ENCODE measurements at regions of chr11 and their contacts with region 1.

Region 1: DNA sequence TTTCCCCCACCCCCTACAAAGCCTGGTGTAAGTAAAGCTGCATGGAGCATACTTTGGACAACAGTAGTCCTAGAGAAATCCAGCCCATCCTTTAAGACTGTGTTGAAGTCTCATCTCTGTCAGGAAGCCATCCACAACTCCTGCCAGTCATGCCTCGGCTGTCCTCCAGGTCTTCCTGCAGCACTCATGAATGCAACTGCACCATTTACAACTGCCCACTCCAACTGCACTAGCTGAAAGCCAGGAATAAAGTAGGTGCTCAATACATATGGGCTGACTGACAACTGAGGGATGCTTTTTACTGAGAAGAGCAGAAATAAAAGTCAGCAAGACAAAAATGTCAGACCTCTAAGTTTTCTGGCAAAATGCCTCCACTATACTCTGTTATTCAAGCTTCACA is 27.4 kb downstream of the IL18BP start:
- DNase-seq: no peak
- H3K4me3 ChIP-seq: no peak overlapping the region
- CTCF ChIP-seq: no peak
- POLR2A ChIP-seq: no peak

Region 2: GRCh38 chr11:72091005-72091691 is 65.1 kb after region 1 on chr11:
- intact Hi-C with region 1: loop called (anchors 5 kb)
- DNase-seq: peak in 1 of 2 donors; percentile 71
- H3K4me3 ChIP-seq: no peak overlapping the region
- CTCF ChIP-seq: peak in 1 of 3 donors; percentile 79
- POLR2A ChIP-seq: no peak

Region 3: DNA sequence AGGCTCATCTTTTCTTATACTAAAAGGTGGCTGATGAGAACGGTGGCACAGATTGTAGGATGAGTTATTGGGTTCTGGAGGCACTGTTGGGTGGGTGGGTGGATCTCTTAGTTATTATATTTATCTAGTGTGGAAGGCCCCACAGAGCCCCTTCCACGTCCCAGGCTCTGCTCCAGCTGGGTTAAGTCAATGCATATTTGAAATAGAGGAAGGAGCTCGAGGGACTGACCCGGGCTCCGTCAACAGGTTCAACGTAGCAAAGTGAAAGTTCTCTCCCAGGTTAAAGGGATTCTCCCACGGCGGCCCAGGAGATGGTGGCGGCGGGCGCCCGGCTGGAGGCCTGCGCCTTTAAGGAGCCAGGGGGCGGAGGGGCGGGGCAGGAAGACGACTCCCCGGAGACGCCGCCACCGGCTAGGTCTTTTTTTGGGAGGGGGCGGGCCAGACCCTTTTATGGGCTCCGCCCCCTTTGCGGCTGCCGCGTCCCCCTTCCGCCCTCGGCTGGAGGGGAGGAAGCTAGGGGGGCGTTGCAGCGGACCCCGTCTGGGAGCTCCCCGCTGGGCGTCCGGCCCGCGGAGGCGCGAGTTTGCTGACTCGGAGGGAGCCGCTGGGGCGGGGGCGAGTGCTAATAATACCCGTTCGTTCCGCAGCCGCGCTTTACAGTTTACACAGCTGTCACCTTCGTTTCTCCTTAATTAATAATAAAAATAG is 197.0 kb after region 1 on chr11:
- intact Hi-C with region 1: no loop called
- DNase-seq: peak; percentile 93 to 98
- H3K4me3 ChIP-seq: peak overlapping the region; percentile 64
- CTCF ChIP-seq: no peak
- POLR2A ChIP-seq: no peak

Region 4: DNA sequence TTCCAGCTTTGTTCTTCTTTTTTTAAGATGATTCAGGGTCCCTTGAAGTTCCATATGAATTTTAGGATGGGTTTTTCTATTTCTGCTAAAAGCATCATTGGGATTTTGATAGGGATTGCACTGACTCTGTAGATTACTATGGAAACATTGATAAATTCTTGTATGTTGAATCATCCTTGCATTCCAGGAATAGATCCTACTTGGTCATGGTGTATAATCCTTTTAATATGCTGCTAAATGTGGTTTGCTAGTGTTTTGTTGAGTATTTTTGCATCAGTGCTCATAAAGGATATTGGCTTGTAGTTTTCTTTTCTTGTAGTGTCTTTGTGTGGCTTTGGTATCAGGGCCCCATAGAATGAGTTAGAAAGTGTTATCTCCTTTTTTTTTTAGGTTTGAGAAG is 252.8 kb after region 1 on chr11:
- intact Hi-C with region 1: no loop called
- DNase-seq: no peak
- H3K4me3 ChIP-seq: no peak overlapping the region
- CTCF ChIP-seq: no peak
- POLR2A ChIP-seq: no peak

Region 5: DNA sequence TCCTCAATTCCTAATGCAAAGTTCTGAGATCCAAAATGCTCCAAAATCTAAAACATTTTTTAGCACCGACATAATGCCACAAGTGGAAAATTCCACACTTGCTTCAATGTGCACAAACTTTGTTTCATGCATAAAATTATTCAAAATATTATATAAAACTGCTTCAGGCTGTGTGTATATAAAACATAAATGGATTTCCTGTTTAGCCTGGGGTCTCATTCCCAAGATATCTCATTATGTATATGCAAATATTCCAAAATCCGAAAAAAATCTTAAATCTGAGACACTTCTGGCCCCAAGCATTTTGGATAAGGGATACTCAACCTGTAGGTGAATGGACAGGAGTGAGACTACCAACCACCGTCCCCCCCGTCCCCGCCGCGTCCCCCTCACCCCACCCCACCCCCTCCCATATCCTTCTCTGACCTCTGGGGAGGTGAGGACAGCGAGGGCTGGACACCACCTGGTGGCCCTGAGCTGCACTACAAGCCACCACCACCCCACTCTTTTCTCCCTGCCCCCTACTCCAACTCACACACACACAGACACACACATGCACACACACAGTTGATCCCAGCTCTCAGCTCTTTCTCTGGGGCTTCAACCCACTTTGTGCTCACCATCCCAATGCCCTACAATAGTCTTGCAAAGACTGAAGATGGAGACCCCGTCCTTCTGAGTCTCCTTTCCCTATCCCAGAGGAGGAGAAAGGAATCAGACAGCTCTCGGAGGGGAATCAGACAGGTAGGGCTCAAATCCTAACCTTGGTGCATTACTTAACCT is 547.2 kb after region 1 on chr11:
- intact Hi-C with region 1: no loop called
- DNase-seq: peak in 1 of 2 donors; percentile 73
- H3K4me3 ChIP-seq: no peak overlapping the region
- CTCF ChIP-seq: no peak
- POLR2A ChIP-seq: no peak